T-cell (primary cell): ENCODE measurements at regions of chr10 and their contacts with region 1.

Region 1: DNA sequence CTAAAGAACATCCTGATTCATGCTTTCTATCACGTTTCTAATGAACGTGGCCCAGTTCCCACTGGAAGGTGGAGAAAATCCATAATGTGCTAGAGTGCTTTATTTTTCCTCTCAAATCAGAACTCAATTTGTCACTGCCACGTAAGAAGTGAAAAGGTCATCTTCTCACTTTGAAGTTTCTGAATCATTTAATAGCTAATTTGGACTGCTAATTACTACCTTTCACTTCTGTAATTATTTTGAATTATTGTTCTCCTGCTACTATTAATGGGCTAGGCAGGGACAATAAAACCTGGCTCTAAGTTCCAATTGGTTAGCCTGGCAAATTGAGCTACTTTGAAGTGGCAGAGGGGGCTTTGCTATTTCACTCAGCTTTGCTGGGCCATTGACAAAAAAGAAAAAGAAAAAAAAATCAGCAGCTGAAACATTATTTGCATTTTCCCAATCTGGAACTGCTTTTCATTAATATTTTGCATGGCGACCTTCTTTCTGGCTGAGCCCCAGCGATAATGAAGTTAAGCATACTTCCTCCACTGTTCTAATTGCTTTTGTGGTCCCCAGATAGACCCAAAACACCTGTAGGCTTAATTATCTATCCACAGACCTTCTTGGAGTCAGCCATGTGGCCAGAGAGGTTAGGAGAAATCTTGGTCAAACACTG is 264.2 kb downstream of the SEC23IP start:
- DNase-seq: no peak
- ATAC-seq: no peak
- H3K4me3 ChIP-seq: no peak overlapping the region
- H3K4me3 Mint-ChIP-seq: no peak overlapping the region
- H3K27ac ChIP-seq: no peak overlapping the region
- H3K27ac Mint-ChIP-seq: no peak overlapping the region
- H3K4me1 ChIP-seq: no peaks in the 10 kb centered on the region
- H3K4me1 Mint-ChIP-seq: no peaks in the 10 kb centered on the region
- H3K27me3 ChIP-seq: peaks cover 0 to 2% of the 10 kb centered on the region in 2 experiments
- H3K27me3 Mint-ChIP-seq: peaks cover 11 to 17% of the 10 kb centered on the region in 2 donors

Region 2: DNA sequence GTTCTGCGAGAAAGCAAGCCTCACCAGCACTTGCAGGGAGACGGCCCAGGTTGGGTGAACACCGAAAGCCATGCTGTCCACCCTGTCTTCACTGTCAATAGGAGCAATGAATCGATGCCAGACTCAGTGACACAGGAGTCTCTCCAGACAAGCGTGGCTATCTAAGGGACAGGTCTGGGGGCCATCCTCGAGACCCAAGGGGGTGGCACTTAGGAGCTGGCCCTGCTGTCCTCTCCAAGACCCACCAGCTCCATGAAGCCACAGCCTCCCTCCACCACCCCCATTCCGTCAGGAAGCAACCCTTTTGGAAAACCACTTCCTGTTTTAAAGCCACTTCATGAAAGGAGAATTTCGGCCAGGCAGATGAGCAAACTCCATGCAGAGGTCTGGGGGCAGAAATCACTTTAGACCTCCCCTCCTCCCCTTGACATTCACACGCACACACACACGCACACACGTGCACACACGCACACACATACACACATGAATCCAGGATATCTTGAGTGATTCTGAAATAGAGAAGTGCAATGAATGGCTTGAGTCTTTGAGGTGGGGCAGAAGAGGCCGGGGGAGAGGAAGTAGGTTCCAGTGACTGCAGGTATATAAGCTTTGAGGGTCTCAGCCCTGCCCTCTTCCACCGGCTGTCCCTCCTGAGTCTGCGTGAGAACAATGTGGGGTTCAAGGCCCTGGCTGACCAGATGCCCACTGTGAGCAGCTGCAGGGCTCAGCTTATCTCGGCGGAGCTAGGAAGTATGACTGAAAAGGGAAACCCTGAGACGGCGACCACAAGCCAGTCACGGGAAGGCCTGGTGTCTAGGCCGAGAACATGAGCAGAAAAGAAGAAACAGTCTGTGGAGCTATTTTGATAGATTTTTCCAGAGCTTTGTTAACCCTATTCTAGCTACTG is 639.3 kb before region 1 on chr10:
- CTCF ChIA-PET with region 1: no interaction called
- POLR2A ChIA-PET with region 1: no interaction called
- DNase-seq: peak in 14 of 35 experiments; percentile 33 to 68 (median 40)
- ATAC-seq: peak; percentile 17 to 39 (median 33)
- H3K4me3 ChIP-seq: peak overlapping the region; percentile 8 to 20
- H3K4me3 Mint-ChIP-seq: peak overlapping the region; percentile 47 to 77 (median 57)
- H3K27ac ChIP-seq: peak overlapping the region; percentile 90
- H3K27ac Mint-ChIP-seq: peak overlapping the region; percentile 95 to 97
- H3K4me1 ChIP-seq: peaks cover 43 to 71% of the 10 kb centered on the region in 2 experiments
- H3K4me1 Mint-ChIP-seq: peaks cover 67 to 78% (median 69%) of the 10 kb centered on the region in 3 donors
- H3K27me3 ChIP-seq: no peaks in the 10 kb centered on the region
- H3K27me3 Mint-ChIP-seq: no peaks in the 10 kb centered on the region

Region 3: DNA sequence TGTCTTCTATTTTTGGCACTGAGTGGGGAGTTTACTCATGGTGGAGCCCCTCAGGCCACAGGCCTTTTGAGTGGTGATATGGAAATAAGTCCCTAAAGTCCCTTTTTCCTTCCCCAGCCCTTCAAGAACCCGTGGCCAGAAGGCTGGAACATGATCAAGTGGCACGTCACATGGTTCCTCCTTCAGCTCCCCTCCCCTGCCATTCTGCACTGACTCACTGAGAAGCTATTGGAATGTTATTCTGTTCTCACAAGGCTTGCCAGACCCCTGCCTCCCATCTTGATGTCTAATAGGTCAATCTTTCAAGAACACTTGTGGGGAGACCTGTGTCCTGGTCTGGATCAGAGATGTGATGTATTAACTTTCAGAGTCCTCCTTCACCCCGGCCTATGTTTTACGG is 15.6 kb after region 1 on chr10:
- CTCF ChIA-PET with region 1: no interaction called
- POLR2A ChIA-PET with region 1: interaction called in 1 of 2 experiments, 12 read pairs
- DNase-seq: no peak
- ATAC-seq: no peak
- H3K4me3 ChIP-seq: no peak overlapping the region
- H3K4me3 Mint-ChIP-seq: no peak overlapping the region
- H3K27ac ChIP-seq: no peak overlapping the region
- H3K27ac Mint-ChIP-seq: no peak overlapping the region
- H3K4me1 ChIP-seq: no peaks in the 10 kb centered on the region
- H3K4me1 Mint-ChIP-seq: no peaks in the 10 kb centered on the region
- H3K27me3 ChIP-seq: no peaks in the 10 kb centered on the region
- H3K27me3 Mint-ChIP-seq: peaks cover 11 to 18% of the 10 kb centered on the region in 2 donors